ENCODE measurements at regions of chr9 and their contacts with region 1.

Region 1: GRCh38 chr9:118652912-118653311 is 716.3 kb downstream of the BRINP1 start:
- DNase-seq: peak; percentile 57
- H3K4me3 ChIP-seq: no peak overlapping the region
- H3K27ac ChIP-seq: no peak overlapping the region
- H3K4me1 ChIP-seq: peaks cover 16% of the 10 kb centered on the region
- H3K27me3 ChIP-seq: no peaks in the 10 kb centered on the region
- CTCF ChIP-seq: no peak

Region 2: GRCh38 chr9:118577121-118577520 is 75.8 kb before region 1 on chr9:
- CTCF ChIA-PET with region 1: no interaction called
- dilution Hi-C with region 1: no loop called
- in situ Hi-C with region 1: no loop called
- intact Hi-C with region 1: loop called (anchors 5 kb)
- DNase-seq: peak; percentile 41
- H3K4me3 ChIP-seq: no peak overlapping the region
- H3K27ac ChIP-seq: peak overlapping the region; percentile 51
- H3K4me1 ChIP-seq: peaks cover 9% of the 10 kb centered on the region
- H3K27me3 ChIP-seq: no peaks in the 10 kb centered on the region
- CTCF ChIP-seq: no peak

Region 3: GRCh38 chr9:118631956-118632355 is 21.0 kb before region 1 on chr9:
- CTCF ChIA-PET with region 1: interaction called, 3 read pairs
- dilution Hi-C with region 1: no loop called
- in situ Hi-C with region 1: no loop called
- intact Hi-C with region 1: loop called (anchors 1 kb)
- DNase-seq: no peak
- H3K4me3 ChIP-seq: no peak overlapping the region
- H3K27ac ChIP-seq: no peak overlapping the region
- H3K4me1 ChIP-seq: no peaks in the 10 kb centered on the region
- H3K27me3 ChIP-seq: no peaks in the 10 kb centered on the region
- CTCF ChIP-seq: no peak

Region 4: GRCh38 chr9:118670011-118670953 is 17.4 kb after region 1 on chr9:
- CTCF ChIA-PET with region 1: no interaction called
- dilution Hi-C with region 1: no loop called
- in situ Hi-C with region 1: no loop called
- intact Hi-C with region 1: no loop called
- DNase-seq: no peak
- H3K4me3 ChIP-seq: no peak overlapping the region
- H3K27ac ChIP-seq: no peak overlapping the region
- H3K4me1 ChIP-seq: no peaks in the 10 kb centered on the region
- H3K27me3 ChIP-seq: no peaks in the 10 kb centered on the region
- CTCF ChIP-seq: no peak